ENCODE measurements at regions of chr1 and their contacts with region 1.

Region 1: GRCh38 chr1:904310-904950 is 19.3 kb upstream of the SAMD11 start:
- DNase-seq: peak; percentile 70 to 75
- H3K4me3 ChIP-seq: peak overlapping the region in 1 of 3 donors; percentile 34
- H3K27ac ChIP-seq: no peak overlapping the region
- H3K4me1 ChIP-seq: peaks cover 5 to 26% of the 10 kb centered on the region in 2 donors
- H3K27me3 ChIP-seq: no peaks in the 10 kb centered on the region
- CTCF ChIP-seq: peak; percentile 26 to 99 (median 90)
- POLR2A ChIP-seq: no peak

Region 2: GRCh38 chr1:970242-970972 is 66.0 kb after region 1 on chr1:
- intact Hi-C with region 1: loop called (anchors 5 kb)
- DNase-seq: no peak
- H3K4me3 ChIP-seq: no peak overlapping the region
- H3K27ac ChIP-seq: no peak overlapping the region
- H3K4me1 ChIP-seq: peaks cover 12 to 33% of the 10 kb centered on the region in 2 donors
- H3K27me3 ChIP-seq: peaks cover 6% of the 10 kb centered on the region
- CTCF ChIP-seq: no peak
- POLR2A ChIP-seq: no peak

Region 3: DNA sequence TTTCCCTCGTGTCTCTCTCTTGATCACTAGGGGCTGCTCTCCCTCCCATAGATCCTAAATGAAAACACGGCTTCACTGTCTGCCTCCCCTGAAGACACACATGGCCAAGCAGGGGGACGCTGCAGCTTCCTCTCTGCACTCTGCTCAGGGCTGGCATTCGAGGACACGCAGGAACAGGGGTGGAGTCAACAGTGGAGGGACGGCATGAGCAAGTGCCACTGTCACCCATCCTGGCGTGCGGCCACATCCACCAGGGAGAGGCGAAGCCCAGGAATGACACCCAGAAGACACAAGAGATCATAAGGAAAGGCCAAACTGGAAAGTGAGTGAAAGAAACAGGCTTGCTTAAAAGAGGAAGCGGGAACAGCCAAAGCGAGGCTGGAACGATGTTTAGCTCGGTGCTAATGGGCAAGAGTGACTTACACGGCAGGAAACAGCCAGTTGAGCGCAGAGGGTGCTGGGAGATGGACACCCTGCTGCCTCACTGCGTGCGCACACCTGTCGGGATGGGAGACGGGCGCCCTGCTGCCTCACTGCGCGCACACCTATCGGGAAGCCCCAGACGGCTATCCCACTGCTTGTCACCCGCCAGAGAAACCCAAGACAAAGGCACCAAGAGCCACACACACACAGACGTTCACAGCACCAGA is 355.6 kb after region 1 on chr1:
- intact Hi-C with region 1: no loop called
- DNase-seq: no peak
- H3K4me3 ChIP-seq: no peak overlapping the region
- H3K27ac ChIP-seq: no peak overlapping the region
- H3K4me1 ChIP-seq: no peaks in the 10 kb centered on the region
- H3K27me3 ChIP-seq: no peaks in the 10 kb centered on the region
- CTCF ChIP-seq: no peak
- POLR2A ChIP-seq: no peak

Measured in thyroid gland (tissue), 4 donors.